ENCODE measurements at regions of chrX and their contacts with region 1.

Region 1: GRCh38 chrX:148133105-148133725 is 152.1 kb downstream of the FMR1NB start:
- DNase-seq: no peak

Region 2: GRCh38 chrX:148069759-148070503 is 63.3 kb before region 1 on chrX:
- intact Hi-C with region 1: no loop called
- DNase-seq: no peak

Region 3: DNA sequence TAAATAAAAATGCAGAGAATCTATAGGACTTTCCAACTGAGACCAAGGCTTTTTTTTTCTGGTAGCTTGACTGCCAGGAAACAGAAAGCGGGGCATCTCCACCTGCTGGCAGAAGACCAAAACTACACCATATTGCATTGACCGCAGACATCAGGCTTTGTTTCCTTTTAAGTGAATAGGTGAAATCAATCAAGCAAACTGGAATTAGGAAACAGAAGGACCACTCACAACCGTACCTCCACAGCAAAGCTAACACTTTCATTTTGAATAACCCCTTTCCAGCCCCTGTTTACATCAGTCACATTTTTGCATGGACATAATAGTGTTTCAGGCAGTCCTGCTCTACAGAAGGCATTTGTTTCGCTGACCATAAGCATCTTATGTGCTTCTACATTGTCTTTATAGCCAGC is 1153.7 kb after region 1 on chrX:
- intact Hi-C with region 1: loop called (anchors 5 kb)
- DNase-seq: peak in 9 of 10 donors; percentile 12 to 82 (median 27)

Region 4: DNA sequence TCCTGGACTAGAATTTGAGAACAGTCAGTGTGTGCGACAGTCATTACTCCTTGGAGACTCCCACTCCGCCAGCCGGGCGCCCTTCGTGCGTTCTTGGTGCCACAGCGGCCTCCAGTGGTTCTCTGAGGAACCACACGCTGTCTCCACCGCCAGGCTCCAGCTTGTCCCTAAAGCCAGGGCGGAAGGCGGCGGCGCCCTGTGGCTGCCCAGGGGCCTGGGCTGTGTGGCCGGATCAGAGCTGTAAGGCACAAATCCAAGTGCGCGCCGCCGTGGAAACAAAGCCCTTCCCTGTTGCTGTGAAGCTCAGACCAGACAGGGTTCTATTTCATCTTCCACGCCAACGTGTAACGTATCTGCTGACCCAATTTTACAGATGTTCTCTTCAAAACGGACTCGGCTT is 1337.7 kb after region 1 on chrX:
- intact Hi-C with region 1: loop called (anchors 10 kb)
- DNase-seq: peak; percentile 70 to 98 (median 82)

Measured in posterior cingulate gyrus (tissue), 11 donors.